ENCODE measurements at regions of chr1 and their contacts with region 1.

Region 1: DNA sequence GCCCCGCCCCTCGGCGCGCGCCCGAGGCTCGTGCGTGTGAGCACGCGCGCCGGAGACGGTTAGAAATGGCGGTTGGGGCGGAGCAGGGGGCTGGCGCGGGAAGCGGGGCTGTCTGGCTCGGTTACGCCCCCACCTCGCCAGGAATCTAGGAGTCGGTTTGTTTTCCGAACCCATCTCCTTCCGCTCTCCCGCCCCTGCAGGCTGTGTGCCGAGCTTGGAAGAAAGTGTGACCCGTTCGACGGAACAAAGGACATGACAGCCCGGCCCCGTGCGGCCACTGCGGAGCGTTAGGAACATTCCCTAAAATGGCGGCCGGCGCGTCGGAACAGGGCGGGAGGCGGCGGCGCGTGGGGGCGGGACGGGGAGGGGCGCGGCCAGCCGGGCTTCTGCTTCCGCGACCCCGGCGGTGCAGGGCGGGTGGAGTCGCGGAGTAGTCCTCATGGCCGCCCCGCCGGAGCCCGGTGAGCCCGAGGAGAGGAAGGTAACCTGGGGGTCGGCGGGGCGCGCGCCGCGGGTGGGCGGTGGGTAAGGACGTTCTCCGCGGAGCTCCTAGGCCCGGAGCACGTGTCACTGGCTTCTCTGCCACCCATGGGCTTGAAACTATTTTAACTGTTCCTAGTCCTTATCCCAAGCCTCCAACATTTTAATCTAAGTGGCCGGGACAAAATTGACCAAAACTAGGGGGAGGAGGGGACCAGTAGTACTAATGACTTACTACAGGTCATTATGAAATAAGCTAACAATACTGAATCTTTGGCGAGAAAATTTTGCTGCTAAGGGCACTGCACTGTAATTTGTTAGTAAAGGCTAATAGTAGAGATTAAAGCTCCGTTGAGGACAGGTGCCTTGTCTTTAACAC is at the start of gene COX20:
- DNase-seq: no peak
- ATAC-seq: peak; percentile 66
- H3K4me3 Mint-ChIP-seq: peak within 1 kb of the TSS; percentile 97
- H3K27ac Mint-ChIP-seq: peak within 1 kb of the TSS; percentile 100
- H3K4me1 Mint-ChIP-seq: peaks cover 43% of the 10 kb centered on the region
- H3K27me3 Mint-ChIP-seq: no peaks in the 10 kb centered on the region
- CTCF ChIP-seq: no peak
- total RNA-seq, gene COX20: 33.1 to 37.6 TPM (median 36.4 TPM) in 3 replicates

Region 2: DNA sequence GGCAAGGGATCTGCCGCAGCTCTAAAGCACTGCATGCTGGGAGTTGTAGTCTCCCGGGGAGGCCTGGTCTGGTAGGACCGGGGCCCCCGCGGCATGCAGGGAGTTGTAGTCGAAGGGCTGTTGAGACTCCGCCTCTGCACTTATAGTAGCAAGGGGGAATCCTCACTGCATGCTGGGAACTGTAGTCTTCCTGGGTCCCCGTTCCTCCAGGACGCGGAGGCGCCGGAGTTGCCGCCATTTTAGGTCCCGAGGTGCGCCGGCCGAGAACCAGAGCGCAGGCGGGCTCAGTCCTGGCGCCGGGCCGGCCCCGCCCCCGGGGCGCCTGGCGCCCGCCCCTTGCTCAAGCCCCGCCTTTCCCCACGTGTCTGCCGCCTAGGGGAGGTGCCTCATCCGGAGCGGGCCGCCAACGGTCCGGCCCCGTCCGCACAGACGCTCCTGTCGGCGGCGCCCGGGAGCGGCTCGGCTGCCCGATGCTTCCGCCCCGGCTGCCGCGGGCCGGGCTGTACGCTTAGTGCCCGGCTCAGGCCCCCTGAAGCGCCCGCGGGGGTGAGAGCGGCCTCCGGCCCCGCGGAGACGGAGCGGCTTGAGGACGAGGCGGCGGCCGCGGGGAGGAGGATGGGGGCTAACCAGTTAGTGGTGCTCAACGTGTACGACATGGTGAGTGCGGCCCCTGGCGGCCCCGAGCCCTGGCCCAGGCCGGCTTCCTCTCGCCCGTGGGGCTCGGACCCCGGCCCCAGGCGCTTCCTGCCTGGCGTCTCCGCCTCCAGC is 182.6 kb before region 1 on chr1 and contains the start of gene DESI2:
- CTCF ChIA-PET with region 1: no interaction called
- POLR2A ChIA-PET with region 1: interaction called, 10 read pairs
- DNase-seq: peak; percentile 98
- ATAC-seq: peak; percentile 94
- H3K4me3 Mint-ChIP-seq: peak within 1 kb of the TSS; percentile 81
- H3K27ac Mint-ChIP-seq: peak within 1 kb of the TSS; percentile 97
- H3K4me1 Mint-ChIP-seq: peaks cover 40% of the 10 kb centered on the region
- H3K27me3 Mint-ChIP-seq: no peaks in the 10 kb centered on the region
- CTCF ChIP-seq: peak; percentile 16; the same call in 1 of the 2 replicates
- total RNA-seq, gene DESI2: 76.1 to 108 TPM (median 76.4 TPM) in 3 replicates

Region 3: DNA sequence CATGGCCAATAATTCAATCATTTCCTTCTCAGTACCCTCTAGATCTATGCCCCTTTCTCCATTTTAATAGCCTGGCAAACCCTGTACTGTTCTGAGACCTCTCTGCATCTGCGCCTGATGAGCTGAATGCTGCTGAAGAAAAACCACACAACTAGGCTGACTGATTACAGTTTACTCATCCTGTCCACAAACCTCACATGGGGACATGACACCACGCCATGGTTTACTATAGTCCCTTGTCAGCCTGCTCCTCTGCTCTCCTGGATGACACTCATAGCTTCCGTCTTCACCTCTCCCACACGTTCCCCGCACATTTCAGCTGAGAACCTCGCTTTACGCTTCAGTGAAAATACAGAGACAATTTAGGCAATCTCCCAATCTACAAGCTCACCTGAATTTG is 122.8 kb before region 1 on chr1:
- CTCF ChIA-PET with region 1: no interaction called
- POLR2A ChIA-PET with region 1: no interaction called
- DNase-seq: no peak
- ATAC-seq: no peak
- H3K4me3 Mint-ChIP-seq: no peak overlapping the region
- H3K27ac Mint-ChIP-seq: no peak overlapping the region
- H3K4me1 Mint-ChIP-seq: peaks cover 11% of the 10 kb centered on the region
- H3K27me3 Mint-ChIP-seq: no peaks in the 10 kb centered on the region
- CTCF ChIP-seq: no peak

Region 4: GRCh38 chr1:244815600-244816099 is 19.9 kb before region 1 on chr1:
- CTCF ChIA-PET with region 1: interaction called, 6 read pairs
- POLR2A ChIA-PET with region 1: interaction called, 10 read pairs
- DNase-seq: peak; percentile 58
- ATAC-seq: peak; percentile 54
- H3K4me3 Mint-ChIP-seq: peak overlapping the region; percentile 87
- H3K27ac Mint-ChIP-seq: peak overlapping the region; percentile 94
- H3K4me1 Mint-ChIP-seq: peaks cover 45% of the 10 kb centered on the region
- H3K27me3 Mint-ChIP-seq: no peaks in the 10 kb centered on the region
- CTCF ChIP-seq: no peak

Region 5: GRCh38 chr1:244864253-244865027 is 28.9 kb after region 1 on chr1 and contains the start of gene HNRNPU:
- CTCF ChIA-PET with region 1: interaction called, 4 read pairs
- POLR2A ChIA-PET with region 1: interaction called, 37 read pairs
- DNase-seq: peak; percentile 97
- ATAC-seq: peak; percentile 86
- H3K4me3 Mint-ChIP-seq: peak within 1 kb of the TSS; percentile 87
- H3K27ac Mint-ChIP-seq: peak within 1 kb of the TSS; percentile 99
- H3K4me1 Mint-ChIP-seq: peaks cover 48% of the 10 kb centered on the region
- H3K27me3 Mint-ChIP-seq: no peaks in the 10 kb centered on the region
- CTCF ChIP-seq: no peak; the same call in 1 of the 2 replicates
- total RNA-seq, gene HNRNPU: 477 to 536 TPM (median 477 TPM) in 3 replicates

Region 6: DNA sequence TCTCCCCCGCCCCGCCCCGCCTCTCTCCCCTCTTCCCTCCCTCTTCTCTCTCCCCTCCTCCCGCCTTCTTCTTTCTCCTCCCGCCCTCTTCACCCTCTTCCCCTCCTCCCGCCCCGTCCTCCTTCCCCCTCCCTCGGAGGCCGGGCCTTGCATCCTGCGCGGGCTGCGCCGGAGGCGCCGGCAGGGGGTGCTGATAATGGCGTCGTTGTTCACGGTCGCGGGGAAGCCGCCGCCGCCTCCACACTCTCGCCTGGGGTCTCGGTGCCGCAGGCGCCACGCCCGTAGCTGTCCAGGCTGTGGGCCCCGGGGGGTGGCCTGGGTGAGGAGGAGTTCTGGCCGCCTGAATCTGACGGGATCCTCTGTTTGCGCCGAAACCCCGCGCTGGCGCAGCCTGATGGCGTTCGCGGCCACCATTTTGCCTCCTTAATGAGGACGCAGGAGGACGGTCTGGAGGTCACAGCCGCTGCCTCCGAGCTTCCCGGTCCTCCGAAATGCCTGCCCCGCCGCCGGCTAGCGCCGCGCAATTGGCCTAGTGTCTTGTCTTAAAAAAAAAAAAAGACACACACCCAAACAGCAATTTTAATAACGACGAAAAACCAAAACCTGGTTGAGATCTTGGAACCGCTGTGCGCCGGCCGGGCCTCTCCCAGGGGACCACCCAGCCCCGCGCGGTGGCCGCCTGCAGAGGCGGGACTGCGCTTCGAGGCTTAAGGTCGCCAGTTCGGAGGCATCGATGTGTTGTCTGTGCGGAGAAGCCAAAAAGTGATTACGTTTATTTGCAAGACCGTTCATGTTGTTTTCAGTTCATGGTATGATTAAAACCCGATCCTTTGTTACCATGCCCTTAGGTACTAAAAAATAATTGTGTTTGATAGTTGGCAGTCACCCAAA is 135.4 kb after region 1 on chr1:
- CTCF ChIA-PET with region 1: no interaction called
- POLR2A ChIA-PET with region 1: interaction called, 16 read pairs
- DNase-seq: peak; percentile 94
- ATAC-seq: peak; percentile 68
- H3K4me3 Mint-ChIP-seq: peak overlapping the region; percentile 84
- H3K27ac Mint-ChIP-seq: peak overlapping the region; percentile 100
- H3K4me1 Mint-ChIP-seq: peaks cover 32% of the 10 kb centered on the region
- H3K27me3 Mint-ChIP-seq: no peaks in the 10 kb centered on the region
- CTCF ChIP-seq: 0 out of 2 replicates have a peak, but pooled peaks have one; percentile 21